ENCODE measurements at regions of chr17 and their contacts with region 1.

Region 1: DNA sequence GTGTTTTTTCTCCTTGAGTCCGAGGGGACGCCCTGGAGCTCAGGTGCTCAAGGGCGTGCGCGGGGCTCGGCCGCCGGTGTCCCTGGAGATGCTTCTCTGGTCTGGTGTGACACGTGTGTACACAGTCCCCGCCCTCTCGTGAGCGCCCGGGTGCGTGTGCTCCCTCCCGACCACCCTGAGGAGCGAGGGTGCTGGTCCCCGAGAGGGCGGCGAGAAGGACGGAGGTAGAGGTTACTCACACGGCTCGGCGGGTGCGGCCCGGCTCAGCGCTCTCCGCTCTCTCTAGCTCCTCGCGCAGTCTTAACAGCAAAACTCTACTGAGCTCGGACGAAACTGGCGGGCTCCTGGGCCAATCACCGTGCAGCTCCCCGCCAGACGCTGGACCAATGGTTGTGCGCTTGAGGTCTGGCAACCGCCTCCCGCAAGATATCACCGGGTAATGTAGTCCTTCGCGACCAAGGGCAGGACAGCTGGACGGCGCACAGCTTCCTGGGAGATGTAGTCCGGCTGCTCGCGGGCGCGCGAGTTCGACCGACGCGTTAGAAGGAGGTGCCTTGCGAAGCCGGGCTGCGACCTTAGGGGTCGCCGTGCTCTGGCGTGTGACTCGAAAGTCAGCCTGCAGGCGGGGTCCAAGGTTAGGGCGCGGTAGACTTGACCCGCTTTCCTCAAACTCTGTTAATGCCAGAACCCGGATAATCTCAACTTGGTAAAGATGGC is at the start of gene SLC25A19:
- DNase-seq: peak; percentile 94 to 99
- ATAC-seq: peak; percentile 87 to 97 (median 93)
- H3K4me3 ChIP-seq: peak within 1 kb of the TSS; percentile 56
- H3K4me3 Mint-ChIP-seq: peak within 1 kb of the TSS; percentile 100
- H3K27ac ChIP-seq: peak within 1 kb of the TSS; percentile 85
- H3K27ac Mint-ChIP-seq: peak within 1 kb of the TSS; percentile 100
- H3K4me1 ChIP-seq: peaks cover 13% of the 10 kb centered on the region
- H3K4me1 Mint-ChIP-seq: peaks cover 15 to 19% of the 10 kb centered on the region in 2 donors
- H3K27me3 ChIP-seq: no peaks in the 10 kb centered on the region
- H3K27me3 Mint-ChIP-seq: no peaks in the 10 kb centered on the region
- CTCF ChIP-seq: no peak
- total RNA-seq, gene SLC25A19: 12.1 to 17.7 (median 14.8) TPM

Region 2: GRCh38 chr17:75113798-75114551 is 175.3 kb before region 1 on chr17:
- intact Hi-C with region 1: no loop called
- DNase-seq: peak; percentile 83 to 97
- ATAC-seq: peak; percentile 76 to 89 (median 77)
- H3K4me3 ChIP-seq: peak overlapping the region; percentile 44
- H3K4me3 Mint-ChIP-seq: peak overlapping the region; percentile 90
- H3K27ac ChIP-seq: peak overlapping the region; percentile 76
- H3K27ac Mint-ChIP-seq: peak overlapping the region; percentile 93 to 96
- H3K4me1 ChIP-seq: peaks cover 42% of the 10 kb centered on the region
- H3K4me1 Mint-ChIP-seq: peaks cover 32 to 36% of the 10 kb centered on the region in 2 donors
- H3K27me3 ChIP-seq: no peaks in the 10 kb centered on the region
- H3K27me3 Mint-ChIP-seq: no peaks in the 10 kb centered on the region
- CTCF ChIP-seq: peak; percentile 92

Region 3: DNA sequence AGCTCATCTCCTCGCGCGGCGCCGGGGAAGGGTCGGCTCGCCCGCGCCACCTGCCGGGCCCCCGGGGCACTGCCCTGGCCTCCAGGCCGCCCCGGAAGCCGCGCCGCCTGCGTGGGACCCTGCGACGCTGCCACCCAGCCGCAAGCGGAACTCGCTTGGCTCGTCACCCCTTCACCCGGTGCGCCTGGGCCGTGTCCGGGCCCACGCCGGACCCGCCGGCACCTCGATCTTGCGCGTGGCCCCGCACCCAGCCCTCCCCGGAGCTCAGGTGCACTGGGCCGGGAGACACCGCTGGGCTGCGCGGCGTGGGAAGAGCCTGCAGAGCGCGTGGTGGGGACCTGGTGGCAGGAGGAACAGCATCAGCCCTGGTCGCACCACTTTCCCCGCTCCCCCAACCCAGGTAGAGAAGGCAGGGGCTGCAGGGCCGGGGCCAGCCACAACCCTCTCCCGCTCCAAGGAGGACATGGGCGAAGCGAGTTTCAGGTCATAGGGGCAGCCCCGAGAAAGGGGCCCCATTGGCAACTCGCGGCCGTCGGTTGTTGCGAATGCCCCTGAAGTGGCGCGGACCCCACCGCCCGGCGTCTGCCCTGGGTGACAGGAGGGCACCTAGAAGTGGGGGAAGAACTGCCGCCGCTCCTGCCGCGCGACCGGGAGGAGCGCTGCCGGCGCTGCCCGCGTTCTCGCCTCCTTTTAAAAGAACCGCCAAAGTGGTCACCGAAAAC is 17.9 kb before region 1 on chr17:
- intact Hi-C with region 1: loop called (anchors 1 kb)
- DNase-seq: peak; percentile 93 to 94
- ATAC-seq: peak; percentile 90 to 98 (median 90)
- H3K4me3 ChIP-seq: peak overlapping the region; percentile 81
- H3K4me3 Mint-ChIP-seq: peak overlapping the region; percentile 88
- H3K27ac ChIP-seq: peak overlapping the region; percentile 91
- H3K27ac Mint-ChIP-seq: peak overlapping the region; percentile 81 to 91
- H3K4me1 ChIP-seq: peaks cover 40% of the 10 kb centered on the region
- H3K4me1 Mint-ChIP-seq: peaks cover 10 to 25% of the 10 kb centered on the region in 2 donors
- H3K27me3 ChIP-seq: no peaks in the 10 kb centered on the region
- H3K27me3 Mint-ChIP-seq: no peaks in the 10 kb centered on the region
- CTCF ChIP-seq: peak; percentile 61

Region 4: GRCh38 chr17:75405365-75406221 is 116.3 kb after region 1 on chr17 and contains the start of gene GRB2:
- intact Hi-C with region 1: loop called (anchors 1 kb)
- DNase-seq: peak; percentile 100
- ATAC-seq: peak; percentile 84 to 95 (median 88)
- H3K4me3 ChIP-seq: peak within 1 kb of the TSS; percentile 99
- H3K4me3 Mint-ChIP-seq: peak within 1 kb of the TSS; percentile 92
- H3K27ac ChIP-seq: peak within 1 kb of the TSS; percentile 89
- H3K27ac Mint-ChIP-seq: peak within 1 kb of the TSS; percentile 86 to 93
- H3K4me1 ChIP-seq: peaks cover 27% of the 10 kb centered on the region
- H3K4me1 Mint-ChIP-seq: peaks cover 43 to 45% of the 10 kb centered on the region in 2 donors
- H3K27me3 ChIP-seq: no peaks in the 10 kb centered on the region
- H3K27me3 Mint-ChIP-seq: peaks cover 0 to 2% of the 10 kb centered on the region in 2 donors
- CTCF ChIP-seq: no peak
- total RNA-seq, gene GRB2: 115 to 142 (median 116) TPM

Region 5: DNA sequence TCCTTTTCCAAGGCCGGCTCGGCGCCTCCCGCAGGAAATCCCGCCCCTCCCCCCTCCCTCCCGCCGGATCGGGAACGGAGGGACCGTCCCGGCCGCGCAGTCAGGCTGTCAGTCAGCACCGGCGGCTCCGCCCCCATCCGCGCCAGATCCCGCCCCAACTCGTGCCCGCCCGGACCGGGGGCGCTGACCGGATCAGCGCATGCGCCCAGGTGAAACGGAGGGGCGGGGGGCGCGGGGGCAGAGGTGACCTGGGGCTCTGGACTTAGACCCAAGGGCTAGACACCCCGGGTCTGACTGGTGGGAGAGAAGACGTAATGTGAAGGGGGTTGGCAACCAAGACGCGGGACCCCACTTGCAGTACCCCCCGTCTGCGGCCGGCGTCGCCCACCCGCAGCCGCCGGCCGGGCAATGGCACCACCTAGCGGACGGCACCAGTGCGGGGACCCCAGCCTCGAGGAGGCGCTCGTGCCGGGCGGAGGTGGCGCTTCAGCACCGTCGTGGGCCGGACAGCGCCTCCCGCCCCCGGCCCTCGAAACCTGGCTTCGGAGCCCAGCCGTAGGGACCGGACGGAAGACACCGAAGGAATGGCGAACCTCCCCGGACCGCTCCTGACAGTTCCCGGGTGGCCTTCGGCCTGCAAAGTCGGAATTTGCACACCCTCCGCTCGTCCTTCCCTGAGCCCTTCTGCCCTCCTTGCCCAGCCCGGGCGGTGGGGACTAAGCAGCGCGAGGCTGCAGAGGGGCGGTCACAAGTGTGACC is 226.4 kb after region 1 on chr17 and contains the start of gene CASKIN2:
- intact Hi-C with region 1: loop called (anchors 5 kb)
- DNase-seq: peak; percentile 72 to 89
- ATAC-seq: peak; percentile 64 to 83 (median 67)
- H3K4me3 ChIP-seq: peak within 1 kb of the TSS; percentile 83
- H3K4me3 Mint-ChIP-seq: peak within 1 kb of the TSS; percentile 80
- H3K27ac ChIP-seq: no peak within 1 kb of the TSS
- H3K27ac Mint-ChIP-seq: peak within 1 kb of the TSS in 1 of 2 donors; percentile 88
- H3K4me1 ChIP-seq: peaks cover 40% of the 10 kb centered on the region
- H3K4me1 Mint-ChIP-seq: peaks cover 19 to 23% of the 10 kb centered on the region in 2 donors
- H3K27me3 ChIP-seq: no peaks in the 10 kb centered on the region
- H3K27me3 Mint-ChIP-seq: no peaks in the 10 kb centered on the region
- CTCF ChIP-seq: peak; percentile 93
- total RNA-seq, gene CASKIN2: 0.49 to 1.8 (median 1.7) TPM

Measured in natural killer cell (primary cell).